ENCODE measurements at regions of chr11 and their contacts with region 1.

Region 1: GRCh38 chr11:6612213-6613041 is at the start of gene TAF10:
- DNase-seq: peak; percentile 90 to 97
- H3K4me3 ChIP-seq: peak within 1 kb of the TSS; percentile 64
- H3K4me1 ChIP-seq: peaks cover 6% of the 10 kb centered on the region
- H3K27me3 ChIP-seq: no peaks in the 10 kb centered on the region

Region 2: DNA sequence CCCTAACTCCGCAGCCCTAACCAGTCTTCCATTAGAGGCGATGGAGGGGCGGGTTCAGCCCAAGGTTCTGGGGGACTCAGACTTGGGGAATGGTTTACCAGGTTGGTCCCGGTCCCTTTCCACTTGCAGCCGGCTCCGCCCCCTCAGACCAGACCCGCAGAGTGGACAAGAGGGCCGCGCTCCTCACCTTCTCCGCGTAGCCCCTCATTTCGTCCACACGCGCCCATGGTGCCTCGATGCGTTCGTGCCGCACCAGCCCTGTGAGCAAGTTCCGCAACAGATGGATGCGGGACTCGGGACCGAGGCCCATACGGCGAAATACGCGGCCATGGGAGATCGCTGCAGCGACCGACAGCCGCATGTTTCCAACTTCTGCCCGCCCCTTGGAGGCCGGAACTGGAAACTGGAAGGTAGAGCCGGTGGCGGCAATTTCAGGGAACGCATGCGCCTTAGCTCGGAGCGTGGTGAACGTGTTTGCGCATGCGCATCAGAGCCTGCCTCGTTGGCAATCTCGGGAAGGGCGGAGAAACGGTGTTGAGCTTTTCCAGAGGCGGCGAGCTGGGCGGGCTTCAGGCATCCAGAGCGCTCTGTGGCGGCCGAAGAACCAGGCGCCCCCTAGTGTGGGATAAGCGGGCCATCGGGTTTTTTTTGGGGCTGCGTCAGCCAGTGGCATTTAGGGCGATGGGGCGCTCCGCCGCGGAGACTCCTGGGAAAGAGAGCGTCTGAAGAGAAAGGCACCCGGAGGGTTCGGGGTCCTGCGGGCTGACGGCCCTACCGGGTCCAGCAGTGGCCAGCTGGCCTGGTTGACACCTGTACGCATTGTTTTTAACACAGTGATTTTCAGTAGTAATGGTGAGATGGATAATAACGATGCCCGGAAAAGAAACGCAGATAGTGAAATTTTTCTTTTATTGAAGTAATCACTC is 70.8 kb after region 1 on chr11 and contains the start of gene MRPL17:
- in situ Hi-C with region 1: loop called (anchors 5 kb)
- DNase-seq: peak; percentile 97 to 99
- H3K4me3 ChIP-seq: peak within 1 kb of the TSS; percentile 90
- H3K4me1 ChIP-seq: peaks cover 7% of the 10 kb centered on the region
- H3K27me3 ChIP-seq: no peaks in the 10 kb centered on the region